Activated T-helper 2 cell treated with anti-CD3 and anti-CD28 coated beads, Interferon-gamma antibody, Interleukin-2, Interleukin-4, amounts not matched to agents 10 μg/mL and 5 μg/mL and 100 μg/mL, durations not matched to agents 14 hours and 24 hours and 36 hours (primary cell): ENCODE measurements at regions of chr7 and their contacts with region 1.

Region 1: GRCh38 chr7:99392677-99393354 is 15.6 kb downstream of the PDAP1 start:
- DNase-seq: peak; percentile 78
- H3K4me3 Mint-ChIP-seq: peak overlapping the region; percentile 54
- H3K27ac Mint-ChIP-seq: peak overlapping the region; percentile 55
- H3K4me1 Mint-ChIP-seq: peaks cover 8% of the 10 kb centered on the region
- H3K27me3 Mint-ChIP-seq: no peaks in the 10 kb centered on the region

Region 2: DNA sequence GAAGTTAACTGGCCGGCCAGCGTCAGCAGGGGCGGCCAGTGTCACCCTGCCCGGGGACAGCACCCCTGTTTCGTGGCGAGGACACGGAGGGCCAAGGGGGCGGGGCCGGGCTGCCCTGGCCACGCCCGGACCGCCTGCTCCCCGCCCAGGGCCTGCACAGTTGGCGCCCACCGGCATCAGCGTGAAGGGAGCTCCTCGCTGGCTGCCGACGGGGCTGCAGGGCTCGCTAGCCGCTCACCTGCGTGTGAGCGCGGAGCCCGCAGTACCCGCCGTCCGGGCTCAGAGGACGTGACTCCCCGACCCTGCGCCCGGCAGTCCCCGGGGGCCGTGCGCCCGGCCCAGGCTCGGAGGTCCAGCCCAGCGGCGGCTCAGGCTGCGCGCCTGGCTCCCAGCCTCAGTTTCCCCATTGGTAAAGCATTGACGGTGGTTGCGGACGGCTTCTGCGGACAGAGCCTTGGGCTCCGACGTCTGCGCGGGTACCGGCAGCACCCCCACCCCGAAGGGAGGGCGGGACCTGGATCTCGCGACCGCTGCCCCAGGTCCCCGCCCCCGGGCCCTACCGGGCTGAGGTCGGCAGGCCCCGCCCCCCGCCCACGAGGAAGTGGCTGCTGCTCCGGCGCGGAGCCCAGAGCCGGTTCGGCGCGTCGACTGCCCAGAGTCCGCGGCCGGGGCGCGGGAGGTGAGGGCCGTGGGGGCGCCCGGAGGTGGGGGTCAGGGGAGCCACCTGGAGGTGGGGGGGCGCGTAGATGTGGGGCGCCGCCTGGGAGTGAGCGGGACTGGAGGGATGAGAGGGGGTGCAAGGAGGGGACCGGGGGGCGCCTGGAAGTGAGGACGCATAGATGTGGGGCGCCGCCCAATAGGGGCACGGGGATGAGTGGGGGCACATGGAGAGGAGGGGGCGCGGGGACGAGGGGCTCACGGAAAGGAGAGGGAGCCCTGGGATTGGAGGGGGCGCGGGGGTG is 18.4 kb before region 1 on chr7 and contains the start of gene ARPC1B:
- intact Hi-C with region 1: loop called (anchors 2 kb)
- DNase-seq: peak; percentile 76
- H3K4me3 Mint-ChIP-seq: peak within 1 kb of the TSS; percentile 81
- H3K27ac Mint-ChIP-seq: peak within 1 kb of the TSS; percentile 71
- H3K4me1 Mint-ChIP-seq: peaks cover 24% of the 10 kb centered on the region
- H3K27me3 Mint-ChIP-seq: no peaks in the 10 kb centered on the region
- total RNA-seq, gene ARPC1B: 264 and 265 TPM in 2 replicates

Region 3: GRCh38 chr7:101251871-101252659 is 1859.2 kb after region 1 on chr7:
- intact Hi-C with region 1: loop called (anchors 5 kb)
- DNase-seq: peak; percentile 98
- H3K4me3 Mint-ChIP-seq: peak overlapping the region; percentile 99
- H3K27ac Mint-ChIP-seq: peak overlapping the region; percentile 96
- H3K4me1 Mint-ChIP-seq: peaks cover 21% of the 10 kb centered on the region
- H3K27me3 Mint-ChIP-seq: no peaks in the 10 kb centered on the region